ENCODE measurements at regions of chr3 and their contacts with region 1.

Region 1: GRCh38 chr3:18159681-18160080 is 265.5 kb downstream of the SATB1 start:
- DNase-seq: no peak
- ATAC-seq: no peak

Region 2: GRCh38 chr3:18279226-18279737 is 119.6 kb after region 1 on chr3:
- intact Hi-C with region 1: loop called (anchors 10 kb)
- DNase-seq: no peak
- ATAC-seq: no peak

Region 3: GRCh38 chr3:18424729-18425640 is 265.3 kb after region 1 on chr3 and contains the start of gene SATB1:
- intact Hi-C with region 1: no loop called
- DNase-seq: peak; percentile 92
- ATAC-seq: peak; percentile 90
- total RNA-seq, gene SATB1: 41.6 TPM